ENCODE measurements at regions of chr4 and their contacts with region 1.

Region 1: DNA sequence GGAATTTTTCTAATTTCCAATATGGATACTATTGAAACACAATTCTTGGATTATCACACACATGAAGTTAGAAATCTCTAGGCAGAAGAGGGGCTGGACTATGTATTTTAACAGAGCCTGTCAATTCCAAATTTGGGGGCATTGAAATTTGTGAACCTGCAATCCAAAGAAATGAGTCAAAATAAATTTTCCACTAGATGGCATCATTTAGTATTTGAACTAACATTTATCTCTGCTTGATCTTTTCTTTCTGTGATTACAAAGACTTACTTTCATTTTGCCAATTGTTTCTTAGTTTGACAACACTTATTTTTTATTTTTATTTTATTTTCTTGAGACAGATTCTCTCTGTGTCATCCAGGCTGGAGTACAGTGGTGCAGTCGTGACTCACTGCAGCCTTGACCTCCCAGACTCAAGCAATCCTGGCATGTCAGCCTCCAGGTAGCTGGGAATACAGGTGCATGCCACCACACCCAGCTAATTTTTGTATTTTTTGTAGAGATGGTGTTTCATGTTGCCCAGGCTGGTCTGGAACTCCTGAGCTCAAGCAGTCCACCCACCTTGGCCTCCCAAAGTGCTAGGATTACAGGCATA is 2.7 kb upstream of the PYURF start:
- DNase-seq: no peak
- H3K4me3 ChIP-seq: no peak overlapping the region
- H3K27ac ChIP-seq: no peak overlapping the region
- H3K4me1 ChIP-seq: peaks cover 11% of the 10 kb centered on the region
- H3K27me3 ChIP-seq: no peaks in the 10 kb centered on the region
- CTCF ChIP-seq: peak in 1 of 3 experiments; percentile 35
- POLR2A ChIP-seq: no peak

Region 2: GRCh38 chr4:88465653-88466192 is 60.6 kb before region 1 on chr4:
- intact Hi-C with region 1: no loop called
- DNase-seq: no peak
- H3K4me3 ChIP-seq: no peak overlapping the region
- H3K27ac ChIP-seq: no peak overlapping the region
- H3K4me1 ChIP-seq: no peaks in the 10 kb centered on the region
- H3K27me3 ChIP-seq: no peaks in the 10 kb centered on the region
- CTCF ChIP-seq: no peak
- POLR2A ChIP-seq: no peak

Region 3: GRCh38 chr4:88661739-88662138 is 135.4 kb after region 1 on chr4:
- intact Hi-C with region 1: loop called (anchors 5 kb)
- DNase-seq: no peak
- H3K4me3 ChIP-seq: no peak overlapping the region
- H3K27ac ChIP-seq: no peak overlapping the region
- H3K4me1 ChIP-seq: no peaks in the 10 kb centered on the region
- H3K27me3 ChIP-seq: no peaks in the 10 kb centered on the region
- CTCF ChIP-seq: no peak
- POLR2A ChIP-seq: no peak

Measured in testis (tissue), 5 donors.